WTC11 (cell line): ENCODE measurements at regions of chr19 and their contacts with region 1.

Region 1: GRCh38 chr19:13099073-13099999 is 3.3 kb downstream of the LYL1 start:
- DNase-seq: peak; percentile 69
- ATAC-seq: no peak
- H3K4me3 Mint-ChIP-seq: peak overlapping the region; percentile 57
- H3K27ac Mint-ChIP-seq: no peak overlapping the region
- H3K4me1 Mint-ChIP-seq: peaks cover 23% of the 10 kb centered on the region
- H3K27me3 Mint-ChIP-seq: peaks cover 77% of the 10 kb centered on the region
- CTCF ChIP-seq: no peak

Region 2: GRCh38 chr19:13051267-13052165 is 47.8 kb before region 1 on chr19:
- CTCF ChIA-PET with region 1: interaction called, 177 read pairs
- POLR2A ChIA-PET with region 1: interaction called, 3 read pairs
- DNase-seq: peak; percentile 89
- ATAC-seq: peak; percentile 79
- H3K4me3 Mint-ChIP-seq: peak overlapping the region; percentile 57
- H3K27ac Mint-ChIP-seq: no peak overlapping the region
- H3K4me1 Mint-ChIP-seq: peaks cover 42% of the 10 kb centered on the region
- H3K27me3 Mint-ChIP-seq: peaks cover 99% of the 10 kb centered on the region
- CTCF ChIP-seq: no peak

Region 3: DNA sequence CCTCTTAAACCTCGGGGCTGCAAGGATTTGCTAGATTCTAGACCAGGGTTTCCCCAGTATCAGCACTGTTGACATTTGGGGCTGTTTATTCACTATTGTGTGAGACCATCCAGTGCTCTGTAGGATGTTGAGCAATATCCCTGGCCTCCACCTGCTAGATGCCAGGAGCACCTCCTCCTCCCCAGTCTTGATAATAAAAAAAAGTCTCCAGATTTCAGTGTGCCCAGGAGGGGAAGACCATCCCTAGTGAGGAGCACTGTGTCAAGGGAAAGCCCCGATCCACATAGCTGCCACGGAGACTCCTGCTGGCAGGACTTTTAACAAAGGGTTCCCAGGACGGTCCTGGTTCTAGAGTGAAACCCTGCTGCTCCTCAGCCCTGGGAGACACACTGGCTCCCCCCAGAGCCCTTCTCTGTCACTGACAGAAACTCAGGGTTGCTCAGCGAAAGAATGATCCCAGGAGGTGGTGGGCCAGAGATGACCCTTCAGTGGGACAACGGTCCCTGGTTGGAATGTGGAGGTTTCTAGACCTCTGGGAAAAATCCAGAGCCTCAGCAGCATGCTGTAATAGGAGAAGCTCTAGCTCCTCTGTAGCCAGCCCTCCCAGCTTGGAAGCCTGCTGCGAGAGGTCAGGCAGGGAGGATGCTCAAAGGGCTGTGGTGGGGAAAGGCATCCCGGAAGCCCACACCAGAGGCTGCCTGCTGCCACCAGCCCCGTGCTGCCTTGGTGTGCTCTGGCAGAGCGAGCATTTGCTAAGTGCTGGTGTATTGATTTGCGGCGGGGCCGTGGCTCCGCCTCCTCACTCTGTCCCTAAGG is 16.9 kb before region 1 on chr19:
- CTCF ChIA-PET with region 1: interaction called, 58 read pairs
- POLR2A ChIA-PET with region 1: no interaction called
- DNase-seq: peak; percentile 60
- ATAC-seq: peak; percentile 67
- H3K4me3 Mint-ChIP-seq: peak overlapping the region; percentile 40; the same call in 1 of the 2 replicates
- H3K27ac Mint-ChIP-seq: no peak overlapping the region
- H3K4me1 Mint-ChIP-seq: peaks cover 37% of the 10 kb centered on the region
- H3K27me3 Mint-ChIP-seq: peaks cover 19% of the 10 kb centered on the region
- CTCF ChIP-seq: no peak

Region 4: GRCh38 chr19:14147797-14148605 is 1048.7 kb after region 1 on chr19:
- CTCF ChIA-PET with region 1: no interaction called
- POLR2A ChIA-PET with region 1: no interaction called
- DNase-seq: peak; percentile 74
- ATAC-seq: peak; percentile 47
- H3K4me3 Mint-ChIP-seq: no peak overlapping the region
- H3K27ac Mint-ChIP-seq: peak overlapping the region; percentile 70
- H3K4me1 Mint-ChIP-seq: peaks cover 27% of the 10 kb centered on the region
- H3K27me3 Mint-ChIP-seq: no peaks in the 10 kb centered on the region; the same call in 1 of the 2 replicates
- CTCF ChIP-seq: no peak